ENCODE measurements at regions of chr11 and their contacts with region 1.

Region 1: DNA sequence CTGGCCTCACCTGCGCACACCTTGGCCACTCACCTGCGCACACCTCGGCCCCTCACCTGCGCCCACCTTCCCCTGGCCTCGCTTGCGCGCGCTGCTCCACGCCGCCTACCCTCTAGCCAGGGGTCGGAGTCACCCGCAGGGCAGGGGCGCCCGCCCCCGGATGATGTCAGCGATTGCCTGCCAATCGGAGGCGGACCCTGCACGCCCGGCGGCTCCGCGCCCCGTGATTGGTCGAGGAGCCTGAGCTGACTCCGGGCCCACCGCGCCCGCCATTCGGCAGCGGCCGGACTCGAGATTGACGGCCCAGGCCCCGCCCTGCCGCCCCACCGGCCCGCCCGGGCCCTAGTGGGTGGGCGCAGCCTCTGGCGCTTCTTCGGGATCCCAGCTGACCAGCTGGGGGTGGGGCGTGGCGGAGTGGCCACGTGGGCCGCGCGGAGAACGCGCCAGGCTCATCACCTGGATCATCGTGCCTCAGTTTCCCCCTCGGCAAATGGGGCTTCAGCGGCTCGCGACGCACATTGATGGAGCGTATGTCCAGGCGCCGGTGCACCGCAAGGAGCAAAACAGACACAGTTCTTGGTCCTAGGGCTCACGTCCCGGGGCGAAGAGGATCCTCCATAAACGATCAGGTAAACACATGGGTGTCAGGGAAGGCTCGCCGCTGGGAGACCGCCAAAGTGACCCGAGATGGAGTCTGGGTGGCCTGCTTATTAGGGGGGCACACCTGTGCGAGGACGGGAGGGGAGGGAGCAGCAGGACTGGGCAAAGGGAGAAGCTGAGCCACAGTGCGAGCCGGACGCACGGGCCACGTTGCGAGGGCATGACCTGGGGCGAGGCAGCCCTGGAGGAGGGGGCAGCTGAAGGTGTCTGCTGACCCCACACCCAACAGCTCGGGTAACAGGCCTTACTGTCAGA is at the start of gene DHCR7:
- DNase-seq: peak; percentile 77 to 96 (median 88)
- ATAC-seq: peak; percentile 73
- H3K4me3 ChIP-seq: peak within 1 kb of the TSS; percentile 99
- H3K4me3 Mint-ChIP-seq: peak within 1 kb of the TSS; percentile 90
- H3K27ac ChIP-seq: peak within 1 kb of the TSS; percentile 69 to 78
- H3K27ac Mint-ChIP-seq: peak within 1 kb of the TSS; percentile 95
- H3K4me1 ChIP-seq: peaks cover 44% of the 10 kb centered on the region
- H3K4me1 Mint-ChIP-seq: peaks cover 55% of the 10 kb centered on the region
- H3K27me3 ChIP-seq: no peaks in the 10 kb centered on the region
- H3K27me3 Mint-ChIP-seq: no peaks in the 10 kb centered on the region
- CTCF ChIP-seq: no peak
- total RNA-seq, gene DHCR7: 30.2 to 30.6 TPM

Region 2: GRCh38 chr11:69675811-69676371 is 1772.6 kb before region 1 on chr11:
- CTCF ChIA-PET with region 1: no interaction called
- POLR2A ChIA-PET with region 1: no interaction called
- intact Hi-C with region 1: loop called in 1 of 2 experiments (anchors 5 kb)
- DNase-seq: no peak
- ATAC-seq: no peak
- H3K4me3 ChIP-seq: peak overlapping the region; percentile 65
- H3K4me3 Mint-ChIP-seq: peak overlapping the region; percentile 97
- H3K27ac ChIP-seq: no peak overlapping the region
- H3K27ac Mint-ChIP-seq: no peak overlapping the region
- H3K4me1 ChIP-seq: peaks cover 30% of the 10 kb centered on the region
- H3K4me1 Mint-ChIP-seq: peaks cover 31% of the 10 kb centered on the region
- H3K27me3 ChIP-seq: no peaks in the 10 kb centered on the region
- H3K27me3 Mint-ChIP-seq: no peaks in the 10 kb centered on the region
- CTCF ChIP-seq: no peak

Region 3: DNA sequence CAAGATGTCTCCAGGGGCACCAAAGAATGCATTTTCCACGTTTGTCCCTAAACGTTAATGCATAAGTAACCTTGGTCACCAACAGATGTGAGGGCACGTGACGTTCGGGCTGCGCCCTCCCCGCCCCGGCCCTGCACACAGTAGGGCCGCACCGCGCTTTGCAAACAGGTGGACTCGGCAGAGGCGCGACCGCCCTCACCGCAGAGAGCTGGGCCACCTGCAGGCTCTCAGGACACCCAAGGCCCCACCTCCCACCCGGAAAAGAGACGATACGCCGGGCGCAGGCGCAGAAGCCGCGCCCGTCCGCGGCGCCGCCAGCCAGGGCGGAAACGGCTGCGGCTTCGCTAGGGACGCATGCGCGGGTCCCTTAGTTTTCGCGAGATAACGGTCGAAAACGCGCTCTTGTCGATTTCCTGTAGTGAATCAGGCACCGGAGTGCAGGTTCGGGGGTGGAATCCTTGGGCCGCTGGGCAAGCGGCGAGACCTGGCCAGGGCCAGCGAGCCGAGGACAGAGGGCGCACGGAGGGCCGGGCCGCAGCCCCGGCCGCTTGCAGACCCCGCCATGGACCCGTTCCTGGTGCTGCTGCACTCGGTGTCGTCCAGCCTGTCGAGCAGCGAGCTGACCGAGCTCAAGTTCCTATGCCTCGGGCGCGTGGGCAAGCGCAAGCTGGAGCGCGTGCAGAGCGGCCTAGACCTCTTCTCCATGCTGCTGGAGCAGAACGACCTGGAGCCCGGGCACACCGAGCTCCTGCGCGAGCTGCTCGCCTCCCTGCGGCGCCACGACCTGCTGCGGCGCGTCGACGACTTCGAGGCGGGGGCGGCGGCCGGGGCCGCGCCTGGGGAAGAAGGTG is 1245.4 kb before region 1 on chr11 and contains the start of gene FADD:
- CTCF ChIA-PET with region 1: no interaction called
- POLR2A ChIA-PET with region 1: no interaction called
- intact Hi-C with region 1: loop called in 1 of 2 experiments (anchors 5 kb)
- DNase-seq: peak; percentile 84 to 97 (median 89)
- ATAC-seq: peak; percentile 52
- H3K4me3 ChIP-seq: peak within 1 kb of the TSS; percentile 81
- H3K4me3 Mint-ChIP-seq: peak within 1 kb of the TSS; percentile 99
- H3K27ac ChIP-seq: peak within 1 kb of the TSS; percentile 90 to 97
- H3K27ac Mint-ChIP-seq: peak within 1 kb of the TSS; percentile 98
- H3K4me1 ChIP-seq: peaks cover 44% of the 10 kb centered on the region
- H3K4me1 Mint-ChIP-seq: peaks cover 48% of the 10 kb centered on the region
- H3K27me3 ChIP-seq: no peaks in the 10 kb centered on the region
- H3K27me3 Mint-ChIP-seq: no peaks in the 10 kb centered on the region
- CTCF ChIP-seq: no peak
- total RNA-seq, gene FADD: 14.5 to 16.5 TPM

Region 4: DNA sequence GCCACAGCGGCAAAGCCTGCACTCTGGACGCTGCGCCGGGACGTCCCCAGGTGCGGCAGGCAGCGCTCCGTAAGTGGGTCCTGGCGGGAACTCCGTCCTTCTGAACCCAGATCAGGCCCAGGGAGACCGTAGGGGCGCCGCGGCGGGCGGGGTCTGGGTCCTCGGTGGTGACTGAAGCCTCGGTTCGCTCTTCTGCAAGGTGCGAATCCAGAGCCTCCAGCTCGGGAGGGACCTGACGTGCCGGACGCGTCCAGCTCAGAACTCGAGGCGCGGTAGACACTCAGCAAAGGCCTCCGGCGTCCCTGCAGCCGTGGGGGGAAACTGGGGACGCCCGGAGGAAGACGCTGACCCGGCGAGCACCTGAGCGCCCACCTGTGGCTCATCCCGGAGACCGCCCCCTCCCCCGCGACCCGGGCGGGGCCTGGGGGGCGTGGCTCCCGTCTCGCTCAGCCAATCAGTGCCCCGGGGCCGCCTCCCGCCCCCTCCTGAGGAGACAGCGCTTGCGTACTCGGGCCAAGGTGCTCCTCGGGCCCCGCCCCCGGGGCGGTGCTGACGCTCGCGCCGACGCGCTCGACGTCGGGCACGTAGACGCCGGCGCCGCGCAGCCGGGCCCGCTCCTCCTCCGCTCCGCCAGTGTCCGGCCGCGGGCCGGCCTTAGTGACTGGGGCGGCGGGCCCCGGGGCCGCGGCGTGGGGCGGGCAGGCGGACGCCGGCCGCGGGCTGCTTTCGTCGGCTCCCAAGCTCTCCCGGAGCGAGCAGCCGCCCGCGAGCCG is 1178.2 kb before region 1 on chr11 and contains the start of gene PPFIA1:
- CTCF ChIA-PET with region 1: no interaction called
- POLR2A ChIA-PET with region 1: no interaction called
- intact Hi-C with region 1: loop called in 1 of 2 experiments (anchors 5 kb)
- DNase-seq: peak; percentile 89 to 98 (median 96)
- ATAC-seq: peak; percentile 92
- H3K4me3 ChIP-seq: peak within 1 kb of the TSS; percentile 98
- H3K4me3 Mint-ChIP-seq: peak within 1 kb of the TSS; percentile 94
- H3K27ac ChIP-seq: peak within 1 kb of the TSS in 1 of 2 donors; percentile 58
- H3K27ac Mint-ChIP-seq: peak within 1 kb of the TSS; percentile 88
- H3K4me1 ChIP-seq: peaks cover 24% of the 10 kb centered on the region
- H3K4me1 Mint-ChIP-seq: peaks cover 35% of the 10 kb centered on the region
- H3K27me3 ChIP-seq: peaks cover 4 to 7% of the 10 kb centered on the region in 2 experiments
- H3K27me3 Mint-ChIP-seq: peaks cover 12% of the 10 kb centered on the region
- CTCF ChIP-seq: no peak
- total RNA-seq, gene PPFIA1: 34.3 to 42.0 TPM

Region 5: GRCh38 chr11:70397983-70398833 is 1050.3 kb before region 1 on chr11 and contains the start of gene CTTN:
- CTCF ChIA-PET with region 1: no interaction called
- POLR2A ChIA-PET with region 1: no interaction called
- intact Hi-C with region 1: loop called in 1 of 2 experiments (anchors 10 kb)
- DNase-seq: peak; percentile 34 to 72 (median 53)
- ATAC-seq: peak; percentile 76
- H3K4me3 ChIP-seq: peak within 1 kb of the TSS; percentile 62
- H3K4me3 Mint-ChIP-seq: peak within 1 kb of the TSS; percentile 88
- H3K27ac ChIP-seq: no peak within 1 kb of the TSS
- H3K27ac Mint-ChIP-seq: no peak within 1 kb of the TSS
- H3K4me1 ChIP-seq: peaks cover 22% of the 10 kb centered on the region
- H3K4me1 Mint-ChIP-seq: peaks cover 12% of the 10 kb centered on the region
- H3K27me3 ChIP-seq: peaks cover 17 to 22% of the 10 kb centered on the region in 2 experiments
- H3K27me3 Mint-ChIP-seq: peaks cover 17% of the 10 kb centered on the region
- CTCF ChIP-seq: no peak
- total RNA-seq, gene CTTN: 0.45 to 0.80 TPM

Region 6: GRCh38 chr11:71787098-71787823 is 338.7 kb after region 1 on chr11:
- CTCF ChIA-PET with region 1: no interaction called
- POLR2A ChIA-PET with region 1: interaction called, 4 read pairs
- intact Hi-C with region 1: loop called in 1 of 2 experiments (anchors 5 kb)
- DNase-seq: peak; percentile 85 to 98 (median 92)
- ATAC-seq: peak; percentile 93
- H3K4me3 ChIP-seq: peak overlapping the region; percentile 85
- H3K4me3 Mint-ChIP-seq: peak overlapping the region; percentile 99
- H3K27ac ChIP-seq: peak overlapping the region; percentile 73 to 98
- H3K27ac Mint-ChIP-seq: peak overlapping the region; percentile 99
- H3K4me1 ChIP-seq: peaks cover 13% of the 10 kb centered on the region
- H3K4me1 Mint-ChIP-seq: peaks cover 18% of the 10 kb centered on the region
- H3K27me3 ChIP-seq: no peaks in the 10 kb centered on the region
- H3K27me3 Mint-ChIP-seq: no peaks in the 10 kb centered on the region
- CTCF ChIP-seq: no peak

Region 7: DNA sequence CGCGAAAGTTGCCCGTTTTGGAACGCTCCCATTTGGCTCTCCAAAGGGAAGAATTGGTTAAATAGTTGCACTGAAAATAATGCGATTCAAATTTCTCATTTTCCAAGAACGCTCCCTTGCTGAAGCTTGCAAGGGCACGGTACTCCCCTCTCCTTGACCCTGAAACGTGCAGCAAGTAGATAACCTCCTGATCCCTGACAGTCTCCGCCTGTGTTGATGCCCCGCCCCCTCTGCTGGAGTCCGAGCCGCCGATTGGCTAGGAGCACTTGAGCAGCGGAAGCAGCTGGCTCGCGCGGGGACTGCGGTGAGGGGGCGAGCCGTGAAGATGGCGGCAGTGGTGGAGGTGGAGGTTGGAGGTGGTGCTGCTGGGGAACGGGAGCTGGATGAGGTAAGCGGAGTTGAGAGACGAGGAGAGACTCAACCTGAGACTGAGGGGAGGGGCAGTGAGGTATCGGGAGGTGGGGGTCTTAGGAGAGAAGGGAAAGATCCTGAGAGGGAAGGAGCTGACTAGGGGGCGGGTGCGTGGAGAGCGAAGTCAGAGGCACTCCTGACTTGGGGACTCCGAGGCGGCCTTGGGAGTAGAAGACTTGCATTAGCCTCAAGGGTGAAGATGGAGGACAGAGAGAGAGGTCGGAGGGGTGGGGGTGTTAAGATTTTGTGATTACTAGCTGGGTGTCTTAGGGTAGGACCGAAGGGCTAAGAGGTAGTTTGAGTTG is 480.4 kb after region 1 on chr11 and contains the start of gene RNF121:
- CTCF ChIA-PET with region 1: no interaction called
- POLR2A ChIA-PET with region 1: no interaction called
- intact Hi-C with region 1: loop called in 1 of 2 experiments (anchors 5 kb)
- DNase-seq: peak; percentile 93 to 98 (median 97)
- ATAC-seq: peak; percentile 86
- H3K4me3 ChIP-seq: peak within 1 kb of the TSS; percentile 79
- H3K4me3 Mint-ChIP-seq: peak within 1 kb of the TSS; percentile 96
- H3K27ac ChIP-seq: peak within 1 kb of the TSS; percentile 92 to 95
- H3K27ac Mint-ChIP-seq: peak within 1 kb of the TSS; percentile 93
- H3K4me1 ChIP-seq: peaks cover 32% of the 10 kb centered on the region
- H3K4me1 Mint-ChIP-seq: peaks cover 57% of the 10 kb centered on the region
- H3K27me3 ChIP-seq: no peaks in the 10 kb centered on the region
- H3K27me3 Mint-ChIP-seq: no peaks in the 10 kb centered on the region
- CTCF ChIP-seq: no peak
- total RNA-seq, gene RNF121: 10.1 to 10.4 TPM